Ascending aorta (tissue), 2 donors: ENCODE measurements at regions of chrX and their contacts with region 1.

Region 1: DNA sequence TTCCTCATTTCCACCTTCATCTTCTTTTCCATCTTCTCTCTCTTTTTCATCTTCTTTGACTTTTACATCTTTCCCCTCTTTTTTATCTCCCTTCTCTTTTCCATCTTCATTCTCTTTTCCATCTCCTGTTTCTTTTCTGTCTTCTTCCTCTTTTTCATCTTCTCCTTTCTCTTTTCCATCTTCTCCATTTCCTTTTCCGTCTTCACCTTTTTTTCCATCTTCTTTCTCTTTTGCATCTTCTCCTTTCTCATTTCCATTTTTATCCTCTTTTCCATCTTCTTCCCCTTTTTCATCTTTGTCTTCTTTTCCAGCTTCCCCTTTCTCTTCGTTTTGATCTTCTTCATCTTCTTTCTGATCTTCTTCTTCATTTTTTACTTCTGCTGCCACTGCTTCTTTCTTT is 87.0 kb downstream of the HMGN5 start:
- DNase-seq: no peak
- H3K4me3 ChIP-seq: no peak overlapping the region
- H3K27ac ChIP-seq: no peak overlapping the region
- H3K4me1 ChIP-seq: no peaks in the 10 kb centered on the region
- H3K27me3 ChIP-seq: no peaks in the 10 kb centered on the region
- CTCF ChIP-seq: no peak

Region 2: GRCh38 chrX:80812176-80812575 is 302.6 kb before region 1 on chrX:
- intact Hi-C with region 1: loop called (anchors 5 kb)
- DNase-seq: no peak
- H3K4me3 ChIP-seq: no peak overlapping the region
- H3K27ac ChIP-seq: no peak overlapping the region
- H3K4me1 ChIP-seq: no peaks in the 10 kb centered on the region
- H3K27me3 ChIP-seq: no peaks in the 10 kb centered on the region
- CTCF ChIP-seq: no peak

Region 3: DNA sequence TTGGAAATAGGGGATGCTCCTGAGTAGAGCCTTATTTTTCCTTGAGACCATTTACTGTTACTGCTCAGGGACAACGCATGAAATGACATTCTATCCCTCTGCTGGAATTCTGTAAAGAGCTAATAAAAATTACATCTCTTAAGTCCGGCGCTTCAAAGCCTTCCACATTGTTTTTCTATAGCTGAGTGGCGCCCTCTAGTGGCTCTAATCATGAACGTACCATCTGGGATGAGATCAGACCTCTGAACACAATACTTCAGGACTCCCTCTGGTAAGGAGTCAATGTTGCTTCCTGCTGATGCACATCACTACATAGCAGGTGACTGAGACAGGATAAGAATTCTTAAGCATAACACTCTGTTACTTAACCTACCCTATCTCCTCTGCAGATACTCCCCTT is 81.0 kb after region 1 on chrX:
- intact Hi-C with region 1: no loop called
- DNase-seq: peak in 1 of 2 donors; percentile 65
- H3K4me3 ChIP-seq: no peak overlapping the region
- H3K27ac ChIP-seq: no peak overlapping the region
- H3K4me1 ChIP-seq: no peaks in the 10 kb centered on the region
- H3K27me3 ChIP-seq: no peaks in the 10 kb centered on the region
- CTCF ChIP-seq: peak in 2 of 3 experiments; percentile 27 to 40